ENCODE measurements at regions of chr13 and their contacts with region 1.

Region 1: GRCh38 chr13:110421696-110422385 is 114.8 kb downstream of the COL4A2 start:
- DNase-seq: no peak
- H3K4me3 Mint-ChIP-seq: no peak overlapping the region
- H3K27ac Mint-ChIP-seq: no peak overlapping the region
- H3K4me1 Mint-ChIP-seq: peaks cover 13% of the 10 kb centered on the region
- H3K27me3 Mint-ChIP-seq: peaks cover 82% of the 10 kb centered on the region

Region 2: GRCh38 chr13:110382229-110382628 is 39.6 kb before region 1 on chr13:
- intact Hi-C with region 1: no loop called
- DNase-seq: no peak
- H3K4me3 Mint-ChIP-seq: no peak overlapping the region
- H3K27ac Mint-ChIP-seq: no peak overlapping the region
- H3K4me1 Mint-ChIP-seq: peaks cover 6% of the 10 kb centered on the region
- H3K27me3 Mint-ChIP-seq: peaks cover 1% of the 10 kb centered on the region

Region 3: DNA sequence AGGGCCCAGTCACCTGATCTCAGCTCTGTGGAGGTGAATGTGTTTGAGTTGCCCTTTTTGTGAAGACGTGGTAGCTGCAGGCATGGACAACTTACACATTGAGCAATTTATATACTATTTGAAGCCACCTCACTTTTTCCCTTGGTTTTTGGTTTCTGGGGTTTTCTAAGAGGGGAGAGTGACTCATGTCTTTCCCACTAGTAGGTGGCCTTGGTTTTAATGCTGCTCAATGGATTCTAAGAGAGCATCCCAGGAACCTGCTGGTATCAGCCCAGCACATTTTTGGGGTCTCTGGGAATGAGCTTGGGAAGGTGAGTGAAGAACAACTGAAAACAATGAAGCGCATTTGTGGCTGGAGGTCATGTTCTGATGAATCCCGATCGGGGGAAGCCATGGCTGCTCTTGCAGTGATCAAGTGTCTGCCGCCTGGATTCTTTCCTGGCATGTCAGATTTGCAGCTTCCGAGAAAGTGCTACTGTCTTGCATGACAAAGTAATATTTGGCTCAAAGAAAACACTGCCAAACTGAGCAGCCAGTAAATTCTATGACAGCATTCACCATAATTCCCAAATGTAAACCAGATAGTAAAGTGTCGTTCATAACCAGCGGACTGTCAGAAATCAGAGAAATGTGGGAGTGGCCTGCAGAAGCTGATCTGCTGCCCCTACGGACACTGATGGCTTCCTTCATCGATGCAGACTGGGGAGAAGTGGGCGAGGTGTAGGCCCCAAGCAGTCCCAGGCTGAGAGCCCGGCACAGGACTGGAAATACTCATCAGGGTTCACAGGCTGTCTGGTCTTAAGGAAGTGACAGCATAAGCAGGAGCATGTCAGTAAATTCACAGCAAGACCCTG is 16.0 kb before region 1 on chr13:
- intact Hi-C with region 1: loop called (anchors 1 kb)
- DNase-seq: no peak
- H3K4me3 Mint-ChIP-seq: no peak overlapping the region
- H3K27ac Mint-ChIP-seq: no peak overlapping the region
- H3K4me1 Mint-ChIP-seq: peaks cover 7% of the 10 kb centered on the region
- H3K27me3 Mint-ChIP-seq: peaks cover 70% of the 10 kb centered on the region

Region 4: GRCh38 chr13:110561344-110562035 is 139.6 kb after region 1 on chr13 and contains the start of gene RAB20:
- intact Hi-C with region 1: loop called (anchors 5 kb)
- DNase-seq: peak; percentile 60
- H3K4me3 Mint-ChIP-seq: peak within 1 kb of the TSS; percentile 87
- H3K27ac Mint-ChIP-seq: peak within 1 kb of the TSS; percentile 74
- H3K4me1 Mint-ChIP-seq: peaks cover 14% of the 10 kb centered on the region
- H3K27me3 Mint-ChIP-seq: peaks cover 40% of the 10 kb centered on the region
- total RNA-seq, gene RAB20: 2.8 and 4.0 TPM in 2 replicates

Region 5: GRCh38 chr13:110615322-110616102 is 193.7 kb after region 1 on chr13 and contains the start of gene NAXD:
- intact Hi-C with region 1: no loop called
- DNase-seq: peak; percentile 76
- H3K4me3 Mint-ChIP-seq: peak within 1 kb of the TSS; percentile 93
- H3K27ac Mint-ChIP-seq: peak within 1 kb of the TSS; percentile 95
- H3K4me1 Mint-ChIP-seq: peaks cover 26% of the 10 kb centered on the region
- H3K27me3 Mint-ChIP-seq: no peaks in the 10 kb centered on the region
- total RNA-seq, gene NAXD: 21.7 and 22.1 TPM in 2 replicates

Measured in activated T-helper 2 cell treated with anti-CD3 and anti-CD28 coated beads, Interferon-gamma antibody, Interleukin-2, Interleukin-4, amounts not matched to agents 10 μg/mL and 5 μg/mL and 100 μg/mL, durations not matched to agents 14 hours and 24 hours and 36 hours (primary cell).